ENCODE measurements at regions of chr5 and their contacts with region 1.

Region 1: DNA sequence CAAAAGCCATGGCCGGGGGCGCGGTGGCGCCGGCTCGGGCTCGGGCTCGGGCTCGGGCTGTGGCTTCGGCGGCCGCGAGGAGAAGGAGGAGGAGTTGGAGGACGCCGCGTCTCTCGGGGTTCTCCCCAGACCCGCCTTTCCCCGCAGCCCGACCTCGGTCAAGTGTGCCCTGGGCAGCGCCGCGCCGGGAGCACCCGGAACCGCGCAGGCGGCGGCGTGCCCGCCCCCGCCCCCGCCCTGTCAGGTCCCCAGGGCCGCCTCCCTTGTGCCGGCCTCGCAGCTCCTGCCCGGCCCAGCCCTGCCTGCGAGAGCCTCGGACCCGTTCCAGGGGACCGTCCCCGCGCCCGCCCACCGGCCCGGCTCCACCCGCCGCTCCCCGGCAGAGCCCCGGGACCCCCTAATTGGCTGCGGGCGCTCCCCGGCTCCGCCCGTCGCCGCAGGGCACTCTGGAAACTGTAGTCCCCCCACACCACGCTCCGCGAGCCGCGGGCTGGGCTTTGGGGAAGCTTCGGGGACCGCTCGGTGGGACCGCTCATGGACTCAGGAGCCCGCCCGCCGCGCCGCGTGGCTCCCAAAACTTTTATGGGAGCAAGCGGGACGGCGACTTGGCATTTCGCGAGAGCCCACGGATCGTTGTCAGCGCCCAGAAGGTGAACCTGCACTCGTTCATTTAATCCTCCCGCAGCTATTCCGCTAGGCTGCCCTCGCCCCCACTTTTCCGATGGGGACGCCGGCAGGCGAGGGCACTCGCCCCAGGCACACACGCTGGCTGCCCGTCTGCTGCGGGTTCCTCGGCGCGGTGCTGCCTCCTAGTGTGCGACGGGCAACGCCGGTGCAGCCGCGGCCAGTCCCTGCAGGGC is at the start of gene STK10:
- DNase-seq: peak; percentile 82 to 92 (median 90)
- ATAC-seq: peak; percentile 86
- H3K4me3 ChIP-seq: peak within 1 kb of the TSS; percentile 89
- H3K4me3 Mint-ChIP-seq: peak within 1 kb of the TSS; percentile 96 to 100 (median 99)
- H3K27ac ChIP-seq: peak within 1 kb of the TSS; percentile 94
- H3K27ac Mint-ChIP-seq: peak within 1 kb of the TSS; percentile 91 to 100 (median 97)
- H3K4me1 ChIP-seq: peaks cover 12 to 15% of the 10 kb centered on the region in 2 donors
- H3K4me1 Mint-ChIP-seq: peaks cover 11 to 35% (median 25%) of the 10 kb centered on the region in 7 donors
- H3K27me3 ChIP-seq: no peaks in the 10 kb centered on the region
- H3K27me3 Mint-ChIP-seq: peaks cover 0 to 11% (median 0%) of the 10 kb centered on the region in 5 donors
- total RNA-seq, gene STK10: 244 to 474 (median 311) TPM

Region 2: DNA sequence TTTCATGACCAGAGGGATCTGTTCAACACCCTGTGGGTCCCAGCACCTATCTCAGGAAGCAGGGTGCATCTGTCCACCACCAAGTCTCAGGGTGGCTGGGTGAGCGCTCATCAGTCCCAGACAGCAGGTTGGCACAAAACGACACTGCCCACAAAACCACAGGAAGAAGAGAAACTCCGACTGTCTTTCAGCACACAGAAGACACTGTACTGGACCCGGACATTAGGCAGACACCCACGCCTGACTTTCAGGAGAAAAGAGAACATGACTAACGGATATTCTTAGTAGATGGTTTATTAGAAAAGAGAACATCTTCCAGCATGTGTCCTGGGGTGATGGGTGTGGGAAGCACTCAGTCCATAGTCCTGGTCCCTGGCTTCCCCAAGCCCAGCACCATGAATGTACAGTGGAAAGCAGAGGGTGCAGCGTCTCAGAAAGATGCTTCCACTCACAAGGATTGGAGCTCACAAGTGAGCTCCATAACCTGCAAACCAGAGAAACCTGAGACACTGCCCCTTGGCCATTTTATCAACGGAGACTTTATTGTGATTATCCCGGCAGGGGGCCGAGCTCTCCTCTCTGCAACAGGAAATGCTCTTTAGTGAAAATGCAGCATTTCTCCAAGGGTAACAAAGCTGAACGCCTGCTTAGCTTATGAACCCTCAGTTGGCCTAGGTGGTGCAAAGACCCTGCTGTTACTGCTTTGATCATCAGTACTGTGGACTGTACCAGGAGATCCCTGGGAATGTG is 1854.9 kb before region 1 on chr5:
- CTCF ChIA-PET with region 1: no interaction called
- POLR2A ChIA-PET with region 1: no interaction called
- intact Hi-C with region 1: loop called in 1 of 2 experiments (anchors 5 kb)
- DNase-seq: peak in 6 of 9 donors; percentile 36 to 61 (median 50)
- ATAC-seq: peak; percentile 36
- H3K4me3 ChIP-seq: peak overlapping the region; percentile 40
- H3K4me3 Mint-ChIP-seq: peak overlapping the region in 4 of 10 donors; percentile 77 to 82 (median 81)
- H3K27ac ChIP-seq: peak overlapping the region; percentile 87
- H3K27ac Mint-ChIP-seq: no peak overlapping the region
- H3K4me1 ChIP-seq: peaks cover 79 to 87% of the 10 kb centered on the region in 2 donors
- H3K4me1 Mint-ChIP-seq: peaks cover 0 to 65% (median 30%) of the 10 kb centered on the region in 7 donors
- H3K27me3 ChIP-seq: no peaks in the 10 kb centered on the region
- H3K27me3 Mint-ChIP-seq: peaks cover 0 to 3% (median 0%) of the 10 kb centered on the region in 5 donors

Region 3: GRCh38 chr5:171913987-171914273 is 274.3 kb before region 1 on chr5:
- CTCF ChIA-PET with region 1: interaction called, 11 read pairs
- POLR2A ChIA-PET with region 1: no interaction called
- intact Hi-C with region 1: loop called (anchors 1 to 2 kb)
- DNase-seq: no peak
- ATAC-seq: no peak
- H3K4me3 ChIP-seq: no peak overlapping the region
- H3K4me3 Mint-ChIP-seq: peak overlapping the region in 1 of 10 donors; percentile 2
- H3K27ac ChIP-seq: no peak overlapping the region
- H3K27ac Mint-ChIP-seq: peak overlapping the region; percentile 12 to 88 (median 73)
- H3K4me1 ChIP-seq: peaks cover 4 to 12% of the 10 kb centered on the region in 2 donors
- H3K4me1 Mint-ChIP-seq: peaks cover 25 to 59% (median 53%) of the 10 kb centered on the region in 7 donors
- H3K27me3 ChIP-seq: no peaks in the 10 kb centered on the region
- H3K27me3 Mint-ChIP-seq: no peaks in the 10 kb centered on the region

Region 4: DNA sequence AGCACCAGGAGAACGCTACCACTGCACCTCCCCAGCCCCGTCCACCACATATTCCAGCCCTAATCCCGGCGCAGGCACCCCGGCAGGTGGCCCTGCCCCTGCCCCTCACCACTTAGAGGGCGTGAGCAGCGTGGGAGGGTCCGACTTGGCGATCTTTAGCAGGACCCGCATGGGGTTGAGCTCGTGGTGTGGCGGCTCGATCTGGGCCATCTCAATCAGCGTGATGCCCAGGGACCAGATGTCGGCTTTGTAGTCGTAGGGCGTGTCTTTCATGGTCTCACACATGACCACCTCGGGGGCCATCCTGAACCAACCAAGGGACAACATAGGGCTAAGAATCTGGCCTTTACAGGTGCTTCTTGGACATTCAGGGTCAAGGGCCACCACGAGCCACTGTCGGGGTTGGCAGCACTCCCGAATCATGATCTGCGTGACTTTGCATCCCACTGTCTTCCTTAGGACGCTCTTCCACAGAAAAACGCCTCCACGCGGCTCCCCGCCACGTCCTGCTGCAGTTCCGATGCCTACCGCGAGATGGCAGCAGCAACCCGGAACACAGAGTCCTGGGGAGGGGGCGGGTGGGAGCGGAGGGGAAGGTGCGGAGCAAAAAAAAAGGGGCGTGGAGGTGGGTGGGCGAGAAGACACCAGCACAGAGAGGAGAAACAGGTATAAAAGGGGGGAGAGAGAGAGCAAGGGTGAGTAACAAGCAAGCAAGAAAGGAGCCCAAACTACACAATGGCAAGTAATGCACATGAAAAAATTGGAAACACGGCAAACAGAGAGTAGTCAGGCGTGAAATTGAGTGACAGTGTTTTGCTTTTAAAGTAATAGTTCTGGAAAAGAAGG is 81.5 kb before region 1 on chr5:
- CTCF ChIA-PET with region 1: interaction called, 57 read pairs
- POLR2A ChIA-PET with region 1: interaction called, 71 read pairs
- intact Hi-C with region 1: loop called (anchors 1 kb)
- DNase-seq: peak; percentile 31 to 78 (median 59)
- ATAC-seq: peak; percentile 43
- H3K4me3 ChIP-seq: no peak overlapping the region
- H3K4me3 Mint-ChIP-seq: peak overlapping the region in 8 of 10 donors; percentile 20 to 49 (median 39)
- H3K27ac ChIP-seq: peak overlapping the region; percentile 24
- H3K27ac Mint-ChIP-seq: peak overlapping the region; percentile 18 to 88 (median 81)
- H3K4me1 ChIP-seq: peaks cover 31 to 37% of the 10 kb centered on the region in 2 donors
- H3K4me1 Mint-ChIP-seq: peaks cover 23 to 61% (median 43%) of the 10 kb centered on the region in 7 donors
- H3K27me3 ChIP-seq: no peaks in the 10 kb centered on the region
- H3K27me3 Mint-ChIP-seq: no peaks in the 10 kb centered on the region

Region 5: DNA sequence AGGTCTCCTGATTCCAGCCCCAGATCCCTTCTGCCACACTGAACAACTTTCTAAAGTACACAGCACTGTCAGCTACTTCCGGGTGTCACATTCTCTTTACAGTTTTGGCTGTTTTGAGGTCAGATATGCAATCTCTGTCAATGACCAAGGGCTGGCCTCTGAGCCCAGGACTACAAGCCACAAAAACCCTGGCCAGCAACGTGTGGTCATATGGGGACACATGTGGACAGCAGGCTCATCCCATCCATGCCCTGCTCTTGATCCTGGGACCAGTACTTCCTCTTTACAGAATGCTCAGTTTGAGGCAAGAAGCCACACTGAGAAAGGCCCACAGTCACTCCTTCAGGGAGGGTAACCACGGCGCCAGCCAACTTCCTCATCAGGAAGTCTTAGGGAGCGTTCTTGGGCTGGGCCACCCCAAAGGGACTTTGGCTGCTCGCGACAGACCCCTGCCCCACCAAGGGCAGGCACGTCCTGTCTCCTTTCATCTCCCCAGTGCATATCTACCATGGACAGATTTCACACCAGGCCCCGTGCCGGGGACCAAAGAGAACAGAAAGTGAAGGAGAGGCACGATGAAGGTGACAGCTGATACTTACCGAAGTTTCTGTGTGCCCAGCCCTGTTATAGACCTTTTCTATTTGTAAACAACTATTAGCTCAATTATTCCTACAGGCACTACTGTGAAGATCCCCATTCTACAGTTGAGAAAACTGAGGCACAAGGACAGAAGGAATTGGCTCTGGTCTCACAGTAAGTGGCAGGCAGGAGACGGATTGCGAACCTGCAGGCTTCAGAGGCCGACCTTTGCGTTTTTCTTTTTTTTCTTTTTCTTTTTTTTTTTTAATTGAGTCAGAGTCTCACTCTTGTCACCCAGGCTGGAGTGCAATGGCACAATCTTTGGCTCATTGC is 37.5 kb before region 1 on chr5:
- CTCF ChIA-PET with region 1: interaction called, 3 read pairs
- POLR2A ChIA-PET with region 1: interaction called, 12 read pairs
- intact Hi-C with region 1: loop called (anchors 1 to 2 kb)
- DNase-seq: peak in 5 of 9 donors; percentile 16 to 33 (median 24)
- ATAC-seq: peak; percentile 83
- H3K4me3 ChIP-seq: peak overlapping the region; percentile 15
- H3K4me3 Mint-ChIP-seq: peak overlapping the region; percentile 41 to 84 (median 75)
- H3K27ac ChIP-seq: peak overlapping the region; percentile 73
- H3K27ac Mint-ChIP-seq: peak overlapping the region; percentile 84 to 95 (median 91)
- H3K4me1 ChIP-seq: peaks cover 40 to 78% of the 10 kb centered on the region in 2 donors
- H3K4me1 Mint-ChIP-seq: peaks cover 55 to 88% (median 75%) of the 10 kb centered on the region in 7 donors
- H3K27me3 ChIP-seq: no peaks in the 10 kb centered on the region
- H3K27me3 Mint-ChIP-seq: no peaks in the 10 kb centered on the region

Region 6: DNA sequence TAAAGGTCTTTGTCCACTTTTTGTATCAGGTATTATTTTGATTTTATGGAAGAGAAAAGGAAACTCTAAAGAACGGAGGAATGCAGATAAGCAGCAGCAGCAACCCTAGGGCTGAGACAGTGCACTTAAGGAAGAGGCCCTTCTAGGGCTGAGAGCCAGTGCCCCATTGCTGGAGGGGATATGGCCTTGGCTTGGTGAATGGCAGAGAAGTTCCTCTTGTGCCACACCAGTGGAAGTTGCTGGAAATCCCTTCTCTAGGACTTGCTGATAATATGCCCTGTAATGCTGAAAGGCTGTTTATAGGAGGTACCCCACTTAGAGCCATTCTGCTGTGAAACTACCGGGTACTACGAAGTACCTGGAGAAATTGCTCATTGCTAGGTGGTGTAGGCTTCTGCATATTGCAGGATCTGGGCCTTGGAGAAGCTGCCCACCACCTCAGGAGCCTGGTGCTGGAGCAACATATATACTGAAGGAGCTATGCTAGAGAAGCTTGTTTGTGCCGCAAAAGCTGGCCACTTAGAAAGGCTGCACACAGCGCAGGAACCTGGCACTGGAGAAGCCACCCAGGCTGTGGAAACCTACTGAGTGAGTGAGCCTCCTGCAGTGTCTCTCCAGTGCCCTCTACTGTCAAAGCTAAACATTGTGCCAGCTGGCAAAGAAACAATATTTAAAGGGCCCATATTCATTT is 104.9 kb after region 1 on chr5:
- CTCF ChIA-PET with region 1: interaction called, 4 read pairs
- POLR2A ChIA-PET with region 1: interaction called, 3 read pairs
- intact Hi-C with region 1: loop called in 1 of 2 experiments (anchors 1 kb)
- DNase-seq: peak; percentile 20 to 77 (median 67)
- ATAC-seq: peak; percentile 100
- H3K4me3 ChIP-seq: no peak overlapping the region
- H3K4me3 Mint-ChIP-seq: no peak overlapping the region
- H3K27ac ChIP-seq: no peak overlapping the region
- H3K27ac Mint-ChIP-seq: peak overlapping the region in 1 of 9 donors; percentile 43
- H3K4me1 ChIP-seq: no peaks in the 10 kb centered on the region
- H3K4me1 Mint-ChIP-seq: peaks cover 0 to 4% (median 2%) of the 10 kb centered on the region in 7 donors
- H3K27me3 ChIP-seq: no peaks in the 10 kb centered on the region
- H3K27me3 Mint-ChIP-seq: peaks cover 0 to 12% (median 0%) of the 10 kb centered on the region in 5 donors

Region 7: DNA sequence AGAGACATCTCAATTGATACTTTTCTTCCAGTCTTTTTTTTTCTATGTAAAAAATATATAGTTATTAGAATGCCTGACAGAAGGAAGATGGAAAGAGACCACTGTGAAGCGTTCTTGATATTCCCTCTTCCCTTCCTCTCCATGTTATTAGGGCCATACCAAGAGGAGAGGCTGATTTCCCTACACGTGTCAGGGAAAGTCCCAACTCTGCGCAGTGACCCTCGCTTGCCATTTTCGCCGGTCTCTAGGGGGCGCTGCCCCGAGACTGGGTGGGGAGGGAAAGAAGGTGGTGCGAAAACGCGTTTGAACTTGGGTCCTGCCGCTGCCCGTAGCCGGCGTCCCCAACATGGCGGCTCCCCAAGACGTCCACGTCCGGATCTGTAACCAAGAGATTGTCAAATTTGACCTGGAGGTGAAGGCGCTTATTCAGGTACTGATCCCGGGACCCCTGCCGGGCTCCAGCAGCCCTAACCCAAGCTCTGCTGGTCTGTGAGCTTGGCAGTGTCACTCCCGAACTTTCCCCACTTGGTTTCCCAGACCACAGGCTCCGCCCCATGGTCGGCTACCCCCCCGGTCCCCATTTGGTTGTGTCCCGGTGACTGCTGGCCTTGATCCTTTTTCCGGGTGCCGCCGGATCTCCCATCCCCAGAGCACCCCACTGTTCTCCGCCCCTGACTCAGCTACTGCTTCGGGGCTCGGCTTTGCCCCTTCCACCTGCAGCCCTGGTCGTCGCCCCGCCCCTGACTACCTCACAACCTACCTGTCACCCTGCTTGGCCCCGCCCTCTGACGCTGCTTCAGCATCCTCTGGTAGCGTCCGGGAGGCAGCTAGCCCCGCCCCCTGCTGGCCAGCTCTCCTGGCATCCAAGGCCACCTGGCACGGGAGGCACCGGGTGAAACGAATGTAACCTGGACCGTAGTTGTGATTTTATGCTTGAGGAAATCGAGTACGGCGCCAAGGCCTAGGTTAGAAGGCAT is 956.2 kb after region 1 on chr5 and contains the start of gene BNIP1:
- CTCF ChIA-PET with region 1: no interaction called
- POLR2A ChIA-PET with region 1: no interaction called
- intact Hi-C with region 1: loop called in 1 of 2 experiments (anchors 10 kb)
- DNase-seq: peak; percentile 92 to 99 (median 96)
- ATAC-seq: peak; percentile 94
- H3K4me3 ChIP-seq: peak within 1 kb of the TSS; percentile 100
- H3K4me3 Mint-ChIP-seq: peak within 1 kb of the TSS; percentile 93 to 99 (median 97)
- H3K27ac ChIP-seq: peak within 1 kb of the TSS; percentile 98
- H3K27ac Mint-ChIP-seq: peak within 1 kb of the TSS; percentile 96 to 99 (median 98)
- H3K4me1 ChIP-seq: no peaks in the 10 kb centered on the region
- H3K4me1 Mint-ChIP-seq: peaks cover 5 to 21% (median 16%) of the 10 kb centered on the region in 7 donors
- H3K27me3 ChIP-seq: no peaks in the 10 kb centered on the region
- H3K27me3 Mint-ChIP-seq: no peaks in the 10 kb centered on the region
- total RNA-seq, gene BNIP1: 5.5 to 23.2 (median 15.3) TPM